Naive thymus-derived CD4-positive, alpha-beta T cell (primary cell): ENCODE measurements at regions of chr10 and their contacts with region 1.

Region 1: GRCh38 chr10:68156373-68157185 is 47.3 kb downstream of the MYPN start:
- DNase-seq: peak; percentile 12 to 63 (median 43)
- ATAC-seq: peak; percentile 85
- H3K4me3 ChIP-seq: no peak overlapping the region
- H3K4me3 Mint-ChIP-seq: no peak overlapping the region
- H3K27ac ChIP-seq: no peak overlapping the region
- H3K27ac Mint-ChIP-seq: no peak overlapping the region
- H3K4me1 ChIP-seq: no peaks in the 10 kb centered on the region
- H3K4me1 Mint-ChIP-seq: peaks cover 0 to 5% (median 0%) of the 10 kb centered on the region in 7 donors
- H3K27me3 ChIP-seq: no peaks in the 10 kb centered on the region
- H3K27me3 Mint-ChIP-seq: peaks cover 0 to 4% (median 2%) of the 10 kb centered on the region in 5 donors

Region 2: GRCh38 chr10:67666416-67667034 is 490.1 kb before region 1 on chr10:
- CTCF ChIA-PET with region 1: no interaction called
- POLR2A ChIA-PET with region 1: no interaction called
- intact Hi-C with region 1: loop called in 1 of 2 experiments (anchors 10 kb)
- DNase-seq: peak in 5 of 9 donors; percentile 8 to 21 (median 17)
- ATAC-seq: no peak
- H3K4me3 ChIP-seq: no peak overlapping the region
- H3K4me3 Mint-ChIP-seq: no peak overlapping the region
- H3K27ac ChIP-seq: no peak overlapping the region
- H3K27ac Mint-ChIP-seq: no peak overlapping the region
- H3K4me1 ChIP-seq: no peaks in the 10 kb centered on the region
- H3K4me1 Mint-ChIP-seq: no peaks in the 10 kb centered on the region
- H3K27me3 ChIP-seq: no peaks in the 10 kb centered on the region
- H3K27me3 Mint-ChIP-seq: peaks cover 0 to 32% (median 0%) of the 10 kb centered on the region in 5 donors

Region 3: GRCh38 chr10:67788025-67788886 is 368.3 kb before region 1 on chr10:
- CTCF ChIA-PET with region 1: interaction called, 17 read pairs
- POLR2A ChIA-PET with region 1: no interaction called
- intact Hi-C with region 1: loop called (anchors 1 kb)
- DNase-seq: peak; percentile 23 to 74 (median 52)
- ATAC-seq: peak; percentile 84
- H3K4me3 ChIP-seq: no peak overlapping the region
- H3K4me3 Mint-ChIP-seq: peak overlapping the region in 5 of 10 donors; percentile 2 to 71 (median 59)
- H3K27ac ChIP-seq: no peak overlapping the region
- H3K27ac Mint-ChIP-seq: peak overlapping the region in 3 of 9 donors; percentile 15 to 79 (median 35)
- H3K4me1 ChIP-seq: peaks cover 0 to 4% of the 10 kb centered on the region in 2 donors
- H3K4me1 Mint-ChIP-seq: peaks cover 11 to 54% (median 15%) of the 10 kb centered on the region in 7 donors
- H3K27me3 ChIP-seq: no peaks in the 10 kb centered on the region
- H3K27me3 Mint-ChIP-seq: no peaks in the 10 kb centered on the region

Region 4: DNA sequence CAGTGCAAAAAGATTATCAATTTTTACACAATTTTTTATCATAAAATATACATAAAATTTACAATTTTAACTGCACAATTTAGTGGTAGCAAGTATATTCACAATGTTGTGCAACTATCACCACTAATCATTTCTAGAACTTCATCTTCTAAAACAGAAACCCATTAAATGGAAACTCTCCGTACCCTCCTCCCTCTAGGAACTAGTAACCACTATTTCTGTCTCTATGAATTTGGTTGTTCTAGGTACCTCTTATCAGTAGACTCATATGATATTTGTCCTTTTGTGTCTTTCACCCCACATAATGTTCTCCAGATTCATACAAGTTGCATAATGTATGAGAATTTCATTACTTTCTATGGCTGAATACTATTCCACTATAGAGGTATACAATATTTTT is 155.0 kb before region 1 on chr10:
- CTCF ChIA-PET with region 1: no interaction called
- POLR2A ChIA-PET with region 1: no interaction called
- intact Hi-C with region 1: loop called in 1 of 2 experiments (anchors 5 kb)
- DNase-seq: no peak
- ATAC-seq: no peak
- H3K4me3 ChIP-seq: no peak overlapping the region
- H3K4me3 Mint-ChIP-seq: no peak overlapping the region
- H3K27ac ChIP-seq: no peak overlapping the region
- H3K27ac Mint-ChIP-seq: peak overlapping the region in 1 of 9 donors; percentile 14
- H3K4me1 ChIP-seq: no peaks in the 10 kb centered on the region
- H3K4me1 Mint-ChIP-seq: peaks cover 0 to 4% (median 0%) of the 10 kb centered on the region in 7 donors
- H3K27me3 ChIP-seq: no peaks in the 10 kb centered on the region
- H3K27me3 Mint-ChIP-seq: no peaks in the 10 kb centered on the region

Region 5: DNA sequence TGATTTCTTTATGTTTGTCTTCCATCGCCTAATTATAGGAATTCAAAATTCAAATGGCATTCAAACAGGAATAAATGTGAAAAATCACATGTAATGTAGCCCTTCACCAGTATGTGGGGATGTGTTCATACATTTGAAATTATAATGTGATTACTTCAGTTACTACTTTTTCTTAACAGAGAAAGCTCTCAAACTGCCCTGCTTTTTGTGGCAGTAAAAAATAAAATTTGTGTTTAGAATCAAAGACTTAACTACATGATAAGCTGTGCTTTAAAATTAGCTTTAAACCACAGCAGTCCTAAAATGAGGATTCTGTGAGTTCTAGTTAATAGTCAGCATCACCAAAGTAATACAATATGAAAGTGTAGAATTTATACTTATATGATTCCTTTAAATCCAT is 73.7 kb before region 1 on chr10:
- CTCF ChIA-PET with region 1: interaction called, 6 read pairs
- POLR2A ChIA-PET with region 1: no interaction called
- intact Hi-C with region 1: loop called (anchors 1 to 5 kb)
- DNase-seq: no peak
- ATAC-seq: no peak
- H3K4me3 ChIP-seq: no peak overlapping the region
- H3K4me3 Mint-ChIP-seq: no peak overlapping the region
- H3K27ac ChIP-seq: no peak overlapping the region
- H3K27ac Mint-ChIP-seq: no peak overlapping the region
- H3K4me1 ChIP-seq: no peaks in the 10 kb centered on the region
- H3K4me1 Mint-ChIP-seq: peaks cover 0 to 10% (median 0%) of the 10 kb centered on the region in 7 donors
- H3K27me3 ChIP-seq: no peaks in the 10 kb centered on the region
- H3K27me3 Mint-ChIP-seq: peaks cover 5 to 21% (median 9%) of the 10 kb centered on the region in 5 donors